ENCODE measurements at regions of chr12 and their contacts with region 1.

Region 1: GRCh38 chr12:39490500-39491276 is 47.8 kb upstream of the KIF21A start:
- DNase-seq: peak; percentile 89
- H3K4me3 Mint-ChIP-seq: no peak overlapping the region
- H3K27ac Mint-ChIP-seq: peak overlapping the region; percentile 84
- H3K4me1 Mint-ChIP-seq: peaks cover 13% of the 10 kb centered on the region
- H3K27me3 Mint-ChIP-seq: no peaks in the 10 kb centered on the region
- CTCF ChIP-seq: no peak

Region 2: GRCh38 chr12:39186744-39187143 is 303.9 kb before region 1 on chr12:
- CTCF ChIA-PET with region 1: no interaction called
- POLR2A ChIA-PET with region 1: no interaction called
- intact Hi-C with region 1: no loop called
- DNase-seq: no peak
- H3K4me3 Mint-ChIP-seq: no peak overlapping the region
- H3K27ac Mint-ChIP-seq: no peak overlapping the region
- H3K4me1 Mint-ChIP-seq: no peaks in the 10 kb centered on the region
- H3K27me3 Mint-ChIP-seq: no peaks in the 10 kb centered on the region
- CTCF ChIP-seq: no peak

Region 3: DNA sequence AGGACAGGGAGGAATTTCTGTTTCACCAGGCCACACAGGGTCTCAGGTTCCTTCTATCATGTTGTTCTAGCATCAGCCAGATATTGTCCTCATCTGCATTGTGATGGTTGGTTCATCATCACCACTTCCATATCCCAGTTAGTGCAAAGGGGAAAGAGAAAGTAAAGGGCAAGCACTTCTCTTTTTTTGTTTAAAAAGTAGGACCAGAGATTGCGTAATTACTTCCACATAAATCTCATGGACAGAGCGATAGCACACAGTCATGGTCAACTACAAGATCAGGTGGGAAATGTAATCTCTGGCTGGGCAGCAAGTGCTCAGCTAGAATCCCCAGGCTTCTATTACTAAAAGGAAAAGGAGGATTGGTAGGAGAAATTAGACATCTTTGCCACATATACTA is 202.9 kb before region 1 on chr12:
- CTCF ChIA-PET with region 1: no interaction called
- POLR2A ChIA-PET with region 1: no interaction called
- intact Hi-C with region 1: no loop called
- DNase-seq: peak; percentile 1
- H3K4me3 Mint-ChIP-seq: no peak overlapping the region
- H3K27ac Mint-ChIP-seq: no peak overlapping the region
- H3K4me1 Mint-ChIP-seq: no peaks in the 10 kb centered on the region
- H3K27me3 Mint-ChIP-seq: no peaks in the 10 kb centered on the region
- CTCF ChIP-seq: no peak

Region 4: DNA sequence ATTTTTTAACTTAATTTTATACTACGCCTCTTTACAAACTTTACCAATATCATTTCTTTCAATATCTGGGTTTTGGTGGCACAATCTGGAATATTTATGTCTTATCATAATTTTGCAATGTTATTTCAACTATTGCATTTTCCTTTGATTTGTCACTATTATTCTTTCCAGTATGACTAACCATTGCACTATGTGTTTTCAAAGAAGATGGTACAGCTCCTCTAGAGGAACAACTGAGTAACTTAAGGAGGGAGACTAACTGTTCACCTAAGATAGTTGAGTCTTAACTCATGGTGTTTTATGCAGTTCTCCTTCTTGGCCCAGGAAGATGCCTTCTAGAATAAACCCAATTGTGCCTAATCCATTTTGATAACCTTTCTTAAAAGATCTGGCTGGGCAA is 12.8 kb after region 1 on chr12:
- CTCF ChIA-PET with region 1: interaction called, 23 read pairs
- POLR2A ChIA-PET with region 1: interaction called, 21 read pairs
- intact Hi-C with region 1: no loop called
- DNase-seq: peak; percentile 61
- H3K4me3 Mint-ChIP-seq: no peak overlapping the region
- H3K27ac Mint-ChIP-seq: no peak overlapping the region
- H3K4me1 Mint-ChIP-seq: peaks cover 18% of the 10 kb centered on the region
- H3K27me3 Mint-ChIP-seq: no peaks in the 10 kb centered on the region
- CTCF ChIP-seq: peak; percentile 51